Activated CD4-positive, alpha-beta T cell treated with anti-CD3 and anti-CD28 coated beads, Interleukin-2, amount 10 ng/mL, durations not matched to agents 24 days and 14 days (primary cell): ENCODE measurements at regions of chr19 and their contacts with region 1.

Region 1: GRCh38 chr19:49443366-49444099 is 2.2 kb upstream of the SLC17A7 start:
- DNase-seq: peak; percentile 98
- H3K4me3 Mint-ChIP-seq: peak overlapping the region; percentile 89
- H3K27ac Mint-ChIP-seq: peak overlapping the region; percentile 88
- H3K4me1 Mint-ChIP-seq: peaks cover 45% of the 10 kb centered on the region
- H3K27me3 Mint-ChIP-seq: peaks cover 39% of the 10 kb centered on the region

Region 2: DNA sequence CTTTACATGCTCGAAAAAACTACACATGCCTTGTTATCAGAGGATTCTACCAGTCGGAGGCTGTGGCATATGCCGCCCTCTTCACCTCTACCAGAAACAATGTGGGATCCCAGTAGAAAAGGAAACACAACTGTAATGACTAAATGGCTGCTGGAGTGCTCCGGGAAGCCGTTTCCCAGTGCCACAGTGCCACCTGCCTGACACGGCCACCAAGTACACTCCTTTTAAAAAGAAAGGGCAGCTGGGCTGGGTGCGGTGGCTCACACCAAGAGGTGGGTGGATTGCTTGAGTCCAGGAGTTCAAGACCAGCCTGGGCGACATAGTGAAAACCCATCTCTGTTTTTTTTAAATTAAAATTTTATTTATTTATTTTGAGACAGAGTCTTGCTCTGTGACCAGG is 218.7 kb before region 1 on chr19:
- intact Hi-C with region 1: loop called (anchors 5 kb)
- DNase-seq: peak; percentile 79
- H3K4me3 Mint-ChIP-seq: no peak overlapping the region
- H3K27ac Mint-ChIP-seq: no peak overlapping the region
- H3K4me1 Mint-ChIP-seq: peaks cover 6% of the 10 kb centered on the region
- H3K27me3 Mint-ChIP-seq: peaks cover 8% of the 10 kb centered on the region

Region 3: GRCh38 chr19:49421039-49421877 is 22.3 kb before region 1 on chr19:
- intact Hi-C with region 1: loop called (anchors 2 kb)
- DNase-seq: peak; percentile 88
- H3K4me3 Mint-ChIP-seq: peak overlapping the region; percentile 62
- H3K27ac Mint-ChIP-seq: peak overlapping the region; percentile 42
- H3K4me1 Mint-ChIP-seq: peaks cover 38% of the 10 kb centered on the region
- H3K27me3 Mint-ChIP-seq: peaks cover 83% of the 10 kb centered on the region

Region 4: DNA sequence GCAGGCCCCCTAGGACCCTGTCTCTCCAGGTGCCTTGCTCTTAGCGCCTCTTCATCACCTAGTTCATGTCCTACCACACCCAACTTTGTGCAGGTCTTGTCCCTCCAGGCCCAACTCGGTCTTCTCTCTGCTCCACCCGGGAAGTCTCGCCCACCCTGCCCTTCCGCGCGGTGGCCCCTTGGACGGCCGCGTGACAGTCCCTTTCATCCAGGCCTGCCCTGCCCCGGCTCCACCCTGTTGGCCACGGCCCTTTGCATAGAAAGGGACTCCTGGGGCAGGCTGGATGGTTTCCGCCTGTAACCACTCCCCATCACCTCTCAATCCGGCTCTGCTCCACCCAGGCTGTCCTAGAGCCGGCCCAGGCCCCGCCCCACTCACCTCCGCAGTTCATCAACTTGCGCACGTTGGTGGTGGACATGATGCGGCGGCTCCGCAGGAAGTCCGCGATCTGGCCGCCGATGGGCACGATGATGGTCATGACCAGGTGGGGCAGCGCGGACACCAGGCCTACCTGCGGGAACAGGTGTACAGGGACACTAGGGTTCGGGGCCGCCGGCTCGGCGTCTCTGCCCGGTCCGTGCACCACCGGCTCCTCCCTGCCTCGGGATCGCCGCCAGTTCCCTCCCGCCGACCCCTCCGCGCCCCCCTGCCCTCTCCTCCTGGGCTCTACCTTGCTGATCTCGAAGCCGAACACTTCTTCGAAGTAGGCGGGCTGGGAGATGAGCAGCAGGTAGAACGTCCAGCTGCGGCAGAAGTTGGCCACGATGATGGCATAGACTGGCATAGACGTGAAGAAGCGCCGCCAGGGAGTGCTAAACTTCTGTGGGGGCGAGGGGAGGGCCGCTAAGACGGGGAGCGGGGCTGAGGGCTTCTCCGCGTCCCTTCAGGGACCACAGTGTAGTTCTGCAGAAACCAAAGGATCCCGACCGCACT is 11.1 kb before region 1 on chr19:
- intact Hi-C with region 1: no loop called
- DNase-seq: peak; percentile 81
- H3K4me3 Mint-ChIP-seq: peak overlapping the region; percentile 19
- H3K27ac Mint-ChIP-seq: no peak overlapping the region
- H3K4me1 Mint-ChIP-seq: peaks cover 43% of the 10 kb centered on the region
- H3K27me3 Mint-ChIP-seq: peaks cover 85% of the 10 kb centered on the region

Region 5: GRCh38 chr19:49555600-49556411 is 112.3 kb after region 1 on chr19:
- intact Hi-C with region 1: no loop called
- DNase-seq: peak; percentile 93
- H3K4me3 Mint-ChIP-seq: peak overlapping the region; percentile 48
- H3K27ac Mint-ChIP-seq: peak overlapping the region; percentile 100
- H3K4me1 Mint-ChIP-seq: peaks cover 70% of the 10 kb centered on the region
- H3K27me3 Mint-ChIP-seq: no peaks in the 10 kb centered on the region